ENCODE measurements at regions of chr20 and their contacts with region 1.

Region 1: DNA sequence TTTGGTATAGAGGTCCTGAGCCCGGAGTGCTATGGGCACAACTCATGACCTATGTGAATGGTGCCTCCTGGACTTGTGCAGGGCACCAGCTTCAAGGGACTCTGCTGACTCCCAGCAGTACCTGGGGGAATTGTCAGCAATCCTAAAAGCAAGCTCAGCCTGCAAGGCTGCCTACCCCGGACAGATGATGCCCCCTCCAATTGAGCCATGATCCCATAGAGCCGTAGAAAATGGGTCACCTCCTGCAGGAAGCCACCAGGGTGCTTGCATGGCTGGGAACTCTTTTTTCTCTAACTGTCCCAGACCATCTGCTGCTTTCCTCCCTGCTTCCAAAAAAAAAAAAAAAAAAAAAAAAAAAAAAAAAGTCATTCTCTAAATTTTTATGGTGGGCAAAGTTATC is 12.9 kb upstream of the PRND start:
- DNase-seq: no peak
- ATAC-seq: no peak
- H3K4me3 ChIP-seq: no peak overlapping the region
- H3K4me3 Mint-ChIP-seq: no peak overlapping the region
- H3K27ac ChIP-seq: no peak overlapping the region
- H3K27ac Mint-ChIP-seq: no peak overlapping the region
- H3K4me1 ChIP-seq: peaks cover 3% of the 10 kb centered on the region
- H3K4me1 Mint-ChIP-seq: no peaks in the 10 kb centered on the region
- H3K27me3 ChIP-seq: no peaks in the 10 kb centered on the region
- H3K27me3 Mint-ChIP-seq: no peaks in the 10 kb centered on the region
- CTCF ChIP-seq: no peak

Region 2: GRCh38 chr20:4661191-4661590 is 47.7 kb before region 1 on chr20:
- CTCF ChIA-PET with region 1: no interaction called
- POLR2A ChIA-PET with region 1: no interaction called
- intact Hi-C with region 1: loop called in 1 of 2 experiments (anchors 5 kb)
- DNase-seq: peak in 9 of 14 experiments; percentile 11 to 68 (median 46)
- ATAC-seq: peak; percentile 62
- H3K4me3 ChIP-seq: no peak overlapping the region
- H3K4me3 Mint-ChIP-seq: no peak overlapping the region
- H3K27ac ChIP-seq: no peak overlapping the region
- H3K27ac Mint-ChIP-seq: peak overlapping the region; percentile 79
- H3K4me1 ChIP-seq: peaks cover 28% of the 10 kb centered on the region
- H3K4me1 Mint-ChIP-seq: peaks cover 37% of the 10 kb centered on the region
- H3K27me3 ChIP-seq: peaks cover 0 to 2% of the 10 kb centered on the region in 2 experiments
- H3K27me3 Mint-ChIP-seq: peaks cover 13% of the 10 kb centered on the region
- CTCF ChIP-seq: no peak

Region 3: DNA sequence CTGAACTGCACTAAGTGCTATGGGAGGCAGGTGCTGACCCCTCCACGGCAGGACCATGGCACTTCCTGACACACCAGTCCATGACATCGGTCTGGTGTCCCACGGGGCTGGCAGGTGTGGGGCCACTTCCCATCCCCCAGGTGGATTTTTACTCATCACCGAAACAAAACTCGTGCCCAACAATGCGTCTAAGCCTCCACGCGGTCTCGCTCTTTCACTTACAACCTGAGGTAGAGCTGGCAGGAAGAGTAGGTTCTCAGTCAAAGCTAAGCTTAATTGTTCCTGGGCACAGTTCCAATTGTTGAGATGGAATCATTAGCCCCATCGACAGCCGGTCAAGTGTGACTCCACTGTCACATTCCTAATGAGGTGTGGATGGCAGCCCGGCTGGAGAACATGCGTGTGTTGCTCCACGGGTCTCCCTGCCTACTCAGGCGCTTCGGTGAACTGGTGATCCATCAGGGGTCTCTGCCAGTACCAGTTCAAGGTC is 166.8 kb after region 1 on chr20:
- CTCF ChIA-PET with region 1: no interaction called
- POLR2A ChIA-PET with region 1: no interaction called
- intact Hi-C with region 1: no loop called
- DNase-seq: no peak
- ATAC-seq: no peak
- H3K4me3 ChIP-seq: no peak overlapping the region
- H3K4me3 Mint-ChIP-seq: no peak overlapping the region
- H3K27ac ChIP-seq: no peak overlapping the region
- H3K27ac Mint-ChIP-seq: no peak overlapping the region
- H3K4me1 ChIP-seq: no peaks in the 10 kb centered on the region
- H3K4me1 Mint-ChIP-seq: no peaks in the 10 kb centered on the region
- H3K27me3 ChIP-seq: no peaks in the 10 kb centered on the region
- H3K27me3 Mint-ChIP-seq: no peaks in the 10 kb centered on the region
- CTCF ChIP-seq: no peak